ENCODE measurements at regions of chr5 and their contacts with region 1.

Region 1: GRCh38 chr5:95369771-95370170 is 21.4 kb upstream of the FAM81B start:
- DNase-seq: no peak
- ATAC-seq: no peak
- H3K4me3 ChIP-seq: no peak overlapping the region
- H3K4me3 Mint-ChIP-seq: no peak overlapping the region
- H3K27ac ChIP-seq: no peak overlapping the region
- H3K27ac Mint-ChIP-seq: no peak overlapping the region
- H3K4me1 ChIP-seq: no peaks in the 10 kb centered on the region
- H3K4me1 Mint-ChIP-seq: no peaks in the 10 kb centered on the region
- H3K27me3 ChIP-seq: no peaks in the 10 kb centered on the region
- H3K27me3 Mint-ChIP-seq: peaks cover 12% of the 10 kb centered on the region
- CTCF ChIP-seq: no peak

Region 2: DNA sequence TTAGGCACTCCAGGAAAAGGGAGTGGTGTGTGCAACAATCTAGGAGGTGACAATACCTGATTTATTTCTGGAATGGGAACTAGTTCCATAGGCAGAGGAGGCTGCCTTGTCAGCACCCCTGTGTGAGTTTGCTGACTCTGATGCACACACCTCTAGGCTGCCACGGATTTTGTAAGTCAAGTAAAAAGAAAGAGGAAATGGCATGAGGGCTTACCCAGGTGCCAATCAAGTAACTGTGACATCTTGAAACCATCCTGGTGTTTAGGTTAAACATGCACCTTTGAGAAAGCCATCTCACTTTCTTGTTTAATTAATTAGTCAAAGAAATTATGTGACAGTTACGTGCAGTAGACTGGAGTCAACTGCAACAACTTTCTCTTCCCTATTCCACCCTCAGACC is 10.9 kb before region 1 on chr5:
- CTCF ChIA-PET with region 1: no interaction called
- POLR2A ChIA-PET with region 1: no interaction called
- intact Hi-C with region 1: no loop called
- DNase-seq: no peak
- ATAC-seq: no peak
- H3K4me3 ChIP-seq: no peak overlapping the region
- H3K4me3 Mint-ChIP-seq: no peak overlapping the region
- H3K27ac ChIP-seq: no peak overlapping the region
- H3K27ac Mint-ChIP-seq: no peak overlapping the region
- H3K4me1 ChIP-seq: no peaks in the 10 kb centered on the region
- H3K4me1 Mint-ChIP-seq: peaks cover 4% of the 10 kb centered on the region
- H3K27me3 ChIP-seq: no peaks in the 10 kb centered on the region
- H3K27me3 Mint-ChIP-seq: no peaks in the 10 kb centered on the region
- CTCF ChIP-seq: no peak

Region 3: GRCh38 chr5:96279801-96280542 is 910.2 kb after region 1 on chr5:
- CTCF ChIA-PET with region 1: no interaction called
- POLR2A ChIA-PET with region 1: no interaction called
- intact Hi-C with region 1: loop called in 1 of 2 experiments (anchors 5 kb)
- DNase-seq: no peak
- ATAC-seq: no peak
- H3K4me3 ChIP-seq: no peak overlapping the region
- H3K4me3 Mint-ChIP-seq: no peak overlapping the region
- H3K27ac ChIP-seq: no peak overlapping the region
- H3K27ac Mint-ChIP-seq: no peak overlapping the region
- H3K4me1 ChIP-seq: no peaks in the 10 kb centered on the region
- H3K4me1 Mint-ChIP-seq: peaks cover 3% of the 10 kb centered on the region
- H3K27me3 ChIP-seq: no peaks in the 10 kb centered on the region
- H3K27me3 Mint-ChIP-seq: peaks cover 6% of the 10 kb centered on the region
- CTCF ChIP-seq: no peak

Measured in CD8-positive, alpha-beta T cell (primary cell).